Psoas muscle (tissue), 8 donors: ENCODE measurements at regions of chr6 and their contacts with region 1.

Region 1: GRCh38 chr6:143450453-143451371 is at the starts of genes ADAT2 and PEX3:
- DNase-seq: peak; percentile 93 to 96
- ATAC-seq: peak; percentile 97 to 98 (median 98)
- H3K4me3 ChIP-seq: peak within 1 kb of the TSS; percentile 69
- H3K27ac ChIP-seq: peak within 1 kb of the TSS; percentile 65
- H3K4me1 ChIP-seq: peaks cover 20% of the 10 kb centered on the region
- H3K27me3 ChIP-seq: no peaks in the 10 kb centered on the region
- CTCF ChIP-seq: no peak
- total RNA-seq, gene ADAT2: 1.2 to 1.7 (median 1.5) TPM
- total RNA-seq, gene PEX3: 12.9 to 17.9 (median 14.0) TPM

Region 2: GRCh38 chr6:143260857-143261256 is 189.9 kb before region 1 on chr6:
- intact Hi-C with region 1: no loop called
- DNase-seq: no peak
- ATAC-seq: no peak
- H3K4me3 ChIP-seq: no peak overlapping the region
- H3K27ac ChIP-seq: no peak overlapping the region
- H3K4me1 ChIP-seq: no peaks in the 10 kb centered on the region
- H3K27me3 ChIP-seq: no peaks in the 10 kb centered on the region
- CTCF ChIP-seq: no peak

Region 3: DNA sequence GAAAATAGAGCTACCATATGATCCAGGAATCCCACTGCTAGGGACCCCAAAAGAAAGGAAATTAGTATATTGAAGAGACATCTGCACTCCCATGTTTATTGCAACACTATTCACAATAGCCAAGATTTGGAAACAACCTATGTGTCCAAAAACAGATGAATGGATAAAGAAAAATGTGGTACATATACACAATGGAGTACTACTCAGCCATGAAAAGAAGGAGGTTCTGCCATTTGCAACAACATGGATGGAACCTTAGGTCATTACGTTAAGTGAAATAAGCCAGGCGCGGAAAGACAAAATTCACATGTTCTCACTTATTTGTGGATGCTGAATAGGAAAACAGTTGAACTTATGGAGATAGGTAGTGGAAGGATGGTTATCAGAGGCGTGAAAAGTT is 137.5 kb before region 1 on chr6:
- intact Hi-C with region 1: no loop called
- DNase-seq: no peak
- ATAC-seq: no peak
- H3K4me3 ChIP-seq: no peak overlapping the region
- H3K27ac ChIP-seq: no peak overlapping the region
- H3K4me1 ChIP-seq: no peaks in the 10 kb centered on the region
- H3K27me3 ChIP-seq: no peaks in the 10 kb centered on the region
- CTCF ChIP-seq: no peak

Region 4: DNA sequence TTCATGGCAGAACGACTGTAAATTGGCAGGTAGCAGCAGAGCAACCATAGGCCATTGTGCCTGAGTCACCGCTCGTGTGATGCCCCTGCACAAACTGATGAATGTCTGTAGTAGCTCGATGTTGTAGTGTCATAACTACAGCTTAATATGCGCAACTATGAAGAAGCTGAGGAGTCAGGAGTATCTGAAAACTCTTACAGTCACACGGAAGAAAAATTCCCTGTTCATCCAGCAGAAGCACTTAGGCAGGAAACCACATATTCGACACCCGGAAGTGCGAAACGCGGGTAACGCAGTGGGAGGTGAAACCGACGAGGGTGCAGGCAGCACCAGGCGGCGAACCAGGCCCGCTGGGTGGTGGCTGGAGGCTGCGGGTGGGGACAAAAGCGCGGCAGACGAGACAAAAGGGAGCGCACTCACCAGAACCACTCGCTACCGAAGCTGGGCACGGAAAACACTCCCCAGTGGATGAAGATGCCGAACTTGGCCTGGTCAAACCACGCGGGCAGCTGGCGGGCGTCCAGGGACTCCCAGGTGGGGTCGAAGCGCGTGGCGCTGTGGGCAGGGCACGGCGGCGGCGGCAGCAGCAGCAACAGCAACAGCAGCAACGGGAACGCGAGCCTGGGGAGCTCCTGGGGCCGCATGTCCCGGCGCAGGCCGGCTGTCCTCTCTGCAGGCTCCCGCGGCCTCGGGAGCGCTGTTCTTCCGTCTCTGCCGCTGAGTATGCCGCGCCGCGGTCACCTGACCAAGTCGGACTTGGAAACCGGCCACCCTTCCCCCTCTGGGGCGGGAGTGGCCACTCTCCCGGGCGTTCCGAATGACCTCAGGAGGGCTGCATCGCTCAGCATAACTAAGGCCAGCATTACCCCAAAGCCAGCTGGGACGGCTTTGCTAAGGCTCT is 60.5 kb after region 1 on chr6 and contains the start of gene FUCA2:
- intact Hi-C with region 1: loop called in 1 of 2 experiments (anchors 5 kb)
- DNase-seq: peak; percentile 92 to 94
- ATAC-seq: peak; percentile 93 to 95 (median 94)
- H3K4me3 ChIP-seq: peak within 1 kb of the TSS; percentile 85
- H3K27ac ChIP-seq: peak within 1 kb of the TSS; percentile 84
- H3K4me1 ChIP-seq: peaks cover 16% of the 10 kb centered on the region
- H3K27me3 ChIP-seq: no peaks in the 10 kb centered on the region
- CTCF ChIP-seq: no peak
- total RNA-seq, gene FUCA2: 8.7 to 13.5 (median 11.2) TPM

Region 5: DNA sequence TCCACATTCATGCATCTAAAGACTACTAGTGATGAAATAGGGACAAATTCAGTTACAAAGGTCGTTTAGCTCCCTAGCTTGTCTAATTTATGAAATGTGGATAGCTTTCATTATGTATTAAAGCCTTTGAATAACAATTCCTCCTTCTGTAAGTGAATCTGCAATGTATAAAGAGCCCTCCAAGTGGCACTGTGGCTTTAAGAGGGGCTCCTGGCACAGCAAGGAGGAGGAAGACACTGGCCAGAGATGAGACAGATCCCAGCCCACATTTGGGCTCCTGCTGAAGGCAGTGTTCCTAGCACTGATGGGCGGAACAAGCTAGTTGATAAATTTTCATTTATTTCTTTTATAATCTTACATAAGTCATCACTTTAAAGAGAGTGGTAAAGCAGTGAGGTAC is 78.4 kb after region 1 on chr6:
- intact Hi-C with region 1: no loop called
- DNase-seq: no peak
- ATAC-seq: no peak
- H3K4me3 ChIP-seq: no peak overlapping the region
- H3K27ac ChIP-seq: no peak overlapping the region
- H3K4me1 ChIP-seq: no peaks in the 10 kb centered on the region
- H3K27me3 ChIP-seq: peaks cover 0 to 6% (median 2%) of the 10 kb centered on the region in 3 donors
- CTCF ChIP-seq: no peak